Activated CD4-positive, alpha-beta memory T cell treated with anti-CD3 and anti-CD28 coated beads for 36 hours (primary cell): ENCODE measurements at regions of chr6 and their contacts with region 1.

Region 1: GRCh38 chr6:21593412-21593926 is at the start of gene SOX4:
- DNase-seq: peak; percentile 64
- H3K4me3 Mint-ChIP-seq: peak within 1 kb of the TSS; percentile 76
- H3K27ac Mint-ChIP-seq: peak within 1 kb of the TSS; percentile 33
- H3K4me1 Mint-ChIP-seq: peaks cover 19% of the 10 kb centered on the region
- H3K27me3 Mint-ChIP-seq: peaks cover 44% of the 10 kb centered on the region
- total RNA-seq, gene SOX4: 0.05 to 0.12 TPM

Region 2: DNA sequence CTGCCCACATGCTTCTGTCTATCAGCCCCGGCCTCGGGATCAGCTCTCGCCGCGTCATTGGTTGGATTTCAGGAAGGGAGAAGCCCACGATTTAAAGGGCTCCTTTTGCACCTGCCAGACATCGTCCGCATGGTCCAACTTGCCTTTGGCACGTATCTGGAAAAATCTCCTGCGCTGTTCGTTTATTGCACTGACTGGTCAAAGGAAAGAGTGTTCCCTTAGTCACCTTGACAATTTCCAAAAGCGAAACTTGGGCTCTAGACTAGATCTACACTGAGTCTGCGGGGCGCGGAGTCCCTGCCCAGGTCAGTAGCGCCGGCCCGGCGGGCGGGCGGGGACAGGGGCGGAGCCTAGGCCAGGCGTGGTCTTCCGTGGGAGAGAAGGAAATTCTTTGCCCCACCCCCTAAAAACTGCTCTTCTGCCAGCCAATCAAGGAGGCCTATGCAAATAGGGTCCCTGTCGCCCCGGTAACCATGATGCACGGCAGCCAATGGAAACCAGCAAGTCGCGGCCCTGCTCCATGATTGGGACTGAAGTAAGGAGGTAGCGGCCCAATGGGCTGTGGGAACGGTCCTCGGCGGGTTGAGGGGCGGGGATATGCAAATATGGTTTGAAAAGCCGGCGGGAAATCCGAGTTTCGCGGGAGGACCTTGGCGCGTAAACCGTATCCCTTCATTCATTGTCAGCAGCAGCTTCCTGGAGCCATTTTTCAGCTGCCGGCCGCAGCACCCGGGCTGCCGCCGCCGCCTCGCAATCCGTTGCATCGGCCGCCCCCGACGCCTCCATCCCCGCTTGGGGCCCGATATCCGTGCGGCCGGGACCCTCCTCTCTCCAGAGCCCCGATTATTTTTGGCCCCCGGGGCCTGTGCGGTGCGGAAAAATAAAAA is 1192.0 kb before region 1 on chr6 and contains the start of gene E2F3:
- CTCF ChIA-PET with region 1: no interaction called
- POLR2A ChIA-PET with region 1: no interaction called
- intact Hi-C with region 1: loop called (anchors 2 kb)
- DNase-seq: peak; percentile 100
- H3K4me3 Mint-ChIP-seq: peak within 1 kb of the TSS; percentile 97
- H3K27ac Mint-ChIP-seq: peak within 1 kb of the TSS; percentile 98
- H3K4me1 Mint-ChIP-seq: peaks cover 35% of the 10 kb centered on the region
- H3K27me3 Mint-ChIP-seq: no peaks in the 10 kb centered on the region
- total RNA-seq, gene E2F3: 17.9 to 18.2 TPM

Region 3: DNA sequence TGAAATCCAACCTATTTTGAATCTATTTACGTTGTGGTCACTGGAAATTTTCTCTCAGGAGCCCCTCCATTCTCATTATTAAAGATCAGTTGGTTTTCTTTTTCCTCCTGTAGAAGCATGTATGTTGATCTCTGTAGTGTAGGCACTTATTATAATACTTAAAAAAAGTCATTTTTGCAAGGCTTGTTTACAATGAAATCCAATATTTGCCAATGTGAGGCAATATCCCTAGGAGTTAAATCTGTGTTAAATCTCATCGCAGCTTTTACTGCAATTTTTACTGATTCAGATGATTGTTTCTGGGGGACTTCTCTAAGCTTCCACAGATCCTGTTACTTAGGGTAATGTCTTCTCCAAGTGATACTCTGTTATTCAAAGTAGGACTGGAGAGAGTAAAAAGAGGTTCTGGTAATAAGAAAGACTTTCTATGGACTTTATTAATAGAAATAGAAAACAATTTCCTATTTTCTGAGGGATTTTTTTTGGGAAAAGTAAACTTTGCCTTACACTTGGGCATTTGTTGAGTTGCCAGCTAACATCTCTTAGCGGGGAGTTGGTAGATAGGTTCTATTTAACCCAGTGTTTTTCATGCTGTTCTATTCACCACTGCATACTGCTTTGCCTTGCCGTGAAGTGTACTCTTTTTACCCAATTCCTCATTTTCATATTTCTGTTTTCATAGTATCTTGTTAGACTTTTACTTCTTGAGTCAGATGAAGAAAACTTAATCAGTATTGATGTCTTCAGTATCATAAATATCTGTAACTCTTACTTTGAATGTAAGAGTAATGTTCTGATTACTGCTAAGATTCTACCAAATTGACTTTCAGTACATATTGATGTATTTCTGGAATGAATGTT is 1010.7 kb before region 1 on chr6:
- CTCF ChIA-PET with region 1: no interaction called
- POLR2A ChIA-PET with region 1: no interaction called
- intact Hi-C with region 1: loop called (anchors 5 kb)
- DNase-seq: no peak
- H3K4me3 Mint-ChIP-seq: no peak overlapping the region
- H3K27ac Mint-ChIP-seq: no peak overlapping the region
- H3K4me1 Mint-ChIP-seq: peaks cover 28% of the 10 kb centered on the region
- H3K27me3 Mint-ChIP-seq: no peaks in the 10 kb centered on the region

Region 4: DNA sequence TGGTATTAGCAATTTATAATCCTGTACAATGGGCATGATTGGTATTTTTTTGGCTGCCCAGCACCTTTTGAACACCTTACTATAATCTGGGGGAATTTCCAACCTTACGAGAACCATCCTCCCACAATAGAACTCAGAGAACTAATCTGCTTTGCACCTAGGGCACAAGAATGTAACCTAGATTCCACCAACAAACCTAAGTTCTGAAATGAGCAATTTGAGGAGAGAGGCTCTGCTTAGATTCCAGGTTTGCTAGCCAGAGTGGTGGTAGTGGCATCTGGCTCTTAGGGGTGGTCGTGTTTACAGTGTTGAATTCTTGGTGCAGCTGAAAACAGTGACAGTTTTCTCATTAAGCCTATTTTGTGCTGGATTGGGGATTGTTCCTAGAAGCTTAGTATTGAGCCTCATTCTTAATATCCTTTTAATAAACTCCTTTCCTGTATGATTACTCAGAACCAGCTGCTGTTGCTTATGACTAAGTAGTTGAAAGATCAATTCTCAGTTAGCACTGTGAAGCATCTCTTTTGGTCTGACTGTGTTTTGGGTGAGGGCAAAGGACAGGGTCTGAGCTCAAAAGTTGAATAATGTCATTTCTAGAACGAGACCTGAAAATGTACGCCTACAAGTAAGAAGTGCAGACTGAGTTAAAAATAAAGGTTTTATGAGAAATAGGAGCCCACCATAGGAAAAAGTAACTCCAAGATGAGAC is 673.6 kb before region 1 on chr6:
- CTCF ChIA-PET with region 1: interaction called, 3 read pairs
- POLR2A ChIA-PET with region 1: no interaction called
- intact Hi-C with region 1: loop called (anchors 1 kb)
- DNase-seq: peak; percentile 39
- H3K4me3 Mint-ChIP-seq: no peak overlapping the region
- H3K27ac Mint-ChIP-seq: peak overlapping the region; percentile 80
- H3K4me1 Mint-ChIP-seq: peaks cover 28% of the 10 kb centered on the region
- H3K27me3 Mint-ChIP-seq: no peaks in the 10 kb centered on the region

Region 5: GRCh38 chr6:21371676-21372161 is 221.8 kb before region 1 on chr6:
- CTCF ChIA-PET with region 1: interaction called, 4 read pairs
- POLR2A ChIA-PET with region 1: no interaction called
- intact Hi-C with region 1: loop called (anchors 10 kb)
- DNase-seq: no peak
- H3K4me3 Mint-ChIP-seq: no peak overlapping the region
- H3K27ac Mint-ChIP-seq: no peak overlapping the region
- H3K4me1 Mint-ChIP-seq: no peaks in the 10 kb centered on the region
- H3K27me3 Mint-ChIP-seq: no peaks in the 10 kb centered on the region

Region 6: DNA sequence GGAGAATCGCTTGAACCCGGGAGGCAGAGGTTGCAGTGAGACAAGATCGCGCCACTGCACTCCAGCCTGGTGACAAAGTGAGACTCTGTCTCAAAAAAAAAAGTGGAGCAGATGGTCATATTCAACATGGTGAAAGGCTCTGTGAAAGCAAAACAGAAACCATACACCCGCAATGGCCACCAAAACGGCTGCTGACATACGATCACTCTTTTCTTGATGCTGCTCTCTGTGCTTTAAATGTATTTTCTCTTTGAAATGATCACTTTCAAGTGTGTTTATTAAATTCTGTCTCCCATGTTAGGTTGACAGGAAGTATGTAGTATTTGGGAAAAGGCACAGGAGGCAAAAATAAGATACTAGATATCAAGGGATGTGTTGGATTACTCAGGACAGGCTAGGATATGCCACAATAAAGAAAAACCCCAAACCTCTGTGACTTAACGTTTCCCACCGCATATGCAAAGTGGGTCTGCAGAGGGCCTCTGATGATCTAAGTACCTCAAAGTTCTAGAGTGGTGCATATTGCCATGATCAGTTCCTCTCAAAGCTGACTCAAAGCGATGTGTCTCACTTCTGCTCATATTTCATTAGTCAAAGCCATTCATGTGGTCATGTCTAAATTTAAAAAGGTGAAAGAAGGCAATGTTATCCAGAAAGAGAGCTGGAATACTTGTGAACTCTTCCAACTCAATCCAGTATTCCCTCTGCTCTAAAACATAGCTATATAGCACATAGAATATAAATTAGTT is 155.1 kb before region 1 on chr6:
- CTCF ChIA-PET with region 1: no interaction called
- POLR2A ChIA-PET with region 1: no interaction called
- intact Hi-C with region 1: loop called (anchors 2 kb)
- DNase-seq: peak; percentile 73
- H3K4me3 Mint-ChIP-seq: peak overlapping the region; percentile 11
- H3K27ac Mint-ChIP-seq: peak overlapping the region; percentile 66
- H3K4me1 Mint-ChIP-seq: peaks cover 14% of the 10 kb centered on the region
- H3K27me3 Mint-ChIP-seq: peaks cover 6% of the 10 kb centered on the region

Region 7: GRCh38 chr6:21634582-21634981 is 41.1 kb after region 1 on chr6:
- CTCF ChIA-PET with region 1: no interaction called
- POLR2A ChIA-PET with region 1: no interaction called
- intact Hi-C with region 1: no loop called
- DNase-seq: no peak
- H3K4me3 Mint-ChIP-seq: no peak overlapping the region
- H3K27ac Mint-ChIP-seq: no peak overlapping the region
- H3K4me1 Mint-ChIP-seq: no peaks in the 10 kb centered on the region
- H3K27me3 Mint-ChIP-seq: no peaks in the 10 kb centered on the region

Region 8: DNA sequence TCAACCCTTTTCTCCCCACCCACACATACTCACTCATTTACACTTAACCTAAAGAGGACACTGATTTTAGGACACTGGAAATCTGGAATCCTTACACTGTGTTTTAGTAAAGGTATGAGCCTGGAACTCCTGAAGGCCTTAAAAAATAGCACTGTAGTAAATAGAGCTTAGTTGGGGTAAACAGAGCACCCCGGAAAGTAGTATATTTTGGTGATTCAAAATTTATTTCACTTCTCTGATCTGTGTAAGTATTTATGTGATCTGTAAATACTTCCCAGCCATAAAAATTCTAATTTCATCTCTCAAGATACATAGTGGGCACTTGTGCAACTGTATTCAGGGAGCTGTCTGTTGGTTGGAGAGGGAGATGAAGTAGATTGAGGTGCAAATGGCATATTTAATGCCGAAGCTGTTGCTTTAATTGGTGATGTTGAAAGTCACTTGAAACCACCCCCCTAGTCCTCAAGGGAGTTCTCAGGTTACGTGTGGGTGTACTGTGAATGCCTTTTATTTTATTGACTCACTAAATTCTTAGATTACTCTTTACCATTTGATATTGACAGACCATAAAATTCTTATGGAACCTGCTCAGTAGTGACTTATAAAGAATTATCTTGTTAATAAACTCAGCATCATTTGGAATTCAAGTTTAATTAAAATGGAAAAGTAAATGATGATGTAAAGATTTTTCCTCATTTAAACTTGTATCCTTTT is 155.0 kb after region 1 on chr6:
- CTCF ChIA-PET with region 1: no interaction called
- POLR2A ChIA-PET with region 1: no interaction called
- intact Hi-C with region 1: no loop called
- DNase-seq: no peak
- H3K4me3 Mint-ChIP-seq: no peak overlapping the region
- H3K27ac Mint-ChIP-seq: no peak overlapping the region
- H3K4me1 Mint-ChIP-seq: no peaks in the 10 kb centered on the region
- H3K27me3 Mint-ChIP-seq: no peaks in the 10 kb centered on the region